Kidney (tissue), 22 donors: ENCODE measurements at regions of chr6 and their contacts with region 1.

Region 1: GRCh38 chr6:16651871-16652270 is 109.4 kb downstream of the ATXN1 start:
- DNase-seq: no peak
- H3K4me3 ChIP-seq: no peak overlapping the region
- H3K27ac ChIP-seq: no peak overlapping the region
- H3K4me1 ChIP-seq: no peaks in the 10 kb centered on the region
- H3K27me3 ChIP-seq: no peaks in the 10 kb centered on the region
- CTCF ChIP-seq: no peak

Region 2: DNA sequence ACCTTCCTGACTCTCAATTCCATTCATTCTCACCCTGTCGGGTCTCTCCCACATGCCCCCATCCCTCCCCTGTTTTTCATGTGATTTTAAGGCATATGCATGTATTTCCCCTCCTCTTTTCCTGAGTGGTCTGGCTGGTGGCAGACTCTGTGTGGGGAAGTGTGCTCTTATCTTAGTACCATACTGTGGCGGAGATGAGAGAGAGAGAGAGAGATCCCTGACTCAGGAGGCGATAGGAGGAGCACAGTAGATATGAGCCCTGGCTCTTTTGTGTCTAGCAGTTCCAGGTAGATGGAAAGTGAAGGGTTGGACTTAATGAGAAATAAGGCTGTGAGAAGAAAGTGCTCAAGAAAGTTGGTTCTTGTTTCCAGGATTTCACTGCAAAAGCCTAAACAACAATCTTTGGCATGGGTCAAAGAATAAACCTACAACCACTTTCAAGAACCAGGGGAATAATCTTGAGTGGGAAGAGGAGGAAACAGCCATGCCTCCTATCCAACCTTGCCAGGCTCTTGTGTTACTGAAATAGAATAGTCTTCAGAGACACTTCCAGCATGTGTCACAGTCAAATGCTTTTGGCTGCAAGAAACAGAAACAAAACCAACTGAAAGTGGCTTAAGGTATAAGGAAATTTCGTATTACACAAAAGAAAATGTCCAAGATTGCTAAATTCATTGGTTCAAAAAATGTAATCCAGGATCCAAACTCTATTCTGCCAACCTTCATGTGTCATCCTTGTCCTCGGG is 646.8 kb before region 1 on chr6:
- intact Hi-C with region 1: no loop called
- DNase-seq: no peak
- H3K4me3 ChIP-seq: no peak overlapping the region
- H3K27ac ChIP-seq: no peak overlapping the region
- H3K4me1 ChIP-seq: no peaks in the 10 kb centered on the region
- H3K27me3 ChIP-seq: no peaks in the 10 kb centered on the region
- CTCF ChIP-seq: no peak

Region 3: GRCh38 chr6:16533721-16534136 is 118.1 kb before region 1 on chr6:
- intact Hi-C with region 1: loop called (anchors 10 kb)
- DNase-seq: no peak
- H3K4me3 ChIP-seq: no peak overlapping the region
- H3K27ac ChIP-seq: no peak overlapping the region
- H3K4me1 ChIP-seq: peaks cover 0 to 3% (median 0%) of the 10 kb centered on the region in 3 donors
- H3K27me3 ChIP-seq: no peaks in the 10 kb centered on the region
- CTCF ChIP-seq: no peak